Activated CD8-positive, alpha-beta memory T cell treated with anti-CD3 and anti-CD28 coated beads, Interleukin-2, amount 10 ng/mL, durations not matched to agents 7 days and 5 days (primary cell): ENCODE measurements at regions of chr10 and their contacts with region 1.

Region 1: GRCh38 chr10:124741281-124741921 is 2.8 kb downstream of the FAM53B start:
- DNase-seq: peak; percentile 84
- ATAC-seq: peak; percentile 62
- H3K4me3 Mint-ChIP-seq: peak overlapping the region; percentile 80
- H3K27ac Mint-ChIP-seq: peak overlapping the region; percentile 87
- H3K4me1 Mint-ChIP-seq: peaks cover 74% of the 10 kb centered on the region
- H3K27me3 Mint-ChIP-seq: peaks cover 2% of the 10 kb centered on the region

Region 2: DNA sequence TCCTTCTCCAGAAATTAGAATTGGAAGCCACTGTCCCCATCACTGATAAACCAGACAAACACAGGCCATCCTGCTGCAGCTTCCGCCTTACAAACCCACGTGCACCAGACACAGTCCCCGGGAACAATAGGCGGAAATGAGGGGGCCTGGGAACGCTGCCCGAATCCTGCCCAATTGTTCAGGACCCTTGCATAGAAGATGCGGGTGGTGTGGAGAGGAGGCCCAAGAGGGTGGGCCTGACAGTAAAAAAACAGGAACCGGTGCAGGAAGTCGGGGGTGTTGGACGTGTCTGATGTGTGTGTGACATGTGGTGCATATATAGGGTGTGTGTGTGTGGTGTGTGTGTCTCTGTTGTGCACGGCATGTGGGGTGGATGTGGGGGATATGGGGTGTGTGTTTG is 621.5 kb before region 1 on chr10:
- CTCF ChIA-PET with region 1: no interaction called
- DNase-seq: no peak
- ATAC-seq: no peak
- H3K4me3 Mint-ChIP-seq: no peak overlapping the region
- H3K27ac Mint-ChIP-seq: no peak overlapping the region
- H3K4me1 Mint-ChIP-seq: no peaks in the 10 kb centered on the region
- H3K27me3 Mint-ChIP-seq: no peaks in the 10 kb centered on the region

Region 3: DNA sequence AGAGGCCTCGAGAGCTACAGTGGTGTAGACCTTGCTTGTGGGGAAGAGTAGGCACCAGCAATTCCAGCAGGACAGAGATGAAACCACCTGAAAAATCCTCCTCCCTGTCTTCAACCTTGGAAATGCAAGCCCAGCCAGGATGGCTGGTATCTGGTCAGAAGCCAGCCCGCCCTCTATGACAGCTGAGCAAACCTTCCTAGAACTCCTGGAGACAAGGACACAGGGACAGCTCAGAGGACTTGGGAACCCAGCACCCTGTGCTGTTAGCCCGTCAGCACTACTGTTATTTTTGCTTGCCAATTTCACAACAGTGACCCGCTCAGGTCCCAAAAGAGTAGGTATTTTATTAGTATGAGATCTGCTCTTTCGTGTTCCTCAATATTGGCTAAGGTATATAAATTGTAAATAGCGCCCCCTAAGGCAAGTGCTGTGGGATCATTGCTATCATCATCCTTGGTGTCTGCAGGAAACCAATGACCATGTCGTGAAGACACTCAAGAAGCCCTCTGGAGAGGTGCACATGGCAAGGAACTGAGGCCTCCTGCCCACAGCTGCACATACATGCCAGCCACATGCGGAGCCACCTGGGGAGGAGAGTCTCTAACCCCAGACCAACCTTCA is 491.5 kb before region 1 on chr10:
- CTCF ChIA-PET with region 1: no interaction called
- DNase-seq: no peak
- ATAC-seq: no peak
- H3K4me3 Mint-ChIP-seq: no peak overlapping the region
- H3K27ac Mint-ChIP-seq: no peak overlapping the region
- H3K4me1 Mint-ChIP-seq: no peaks in the 10 kb centered on the region
- H3K27me3 Mint-ChIP-seq: peaks cover 9% of the 10 kb centered on the region

Region 4: DNA sequence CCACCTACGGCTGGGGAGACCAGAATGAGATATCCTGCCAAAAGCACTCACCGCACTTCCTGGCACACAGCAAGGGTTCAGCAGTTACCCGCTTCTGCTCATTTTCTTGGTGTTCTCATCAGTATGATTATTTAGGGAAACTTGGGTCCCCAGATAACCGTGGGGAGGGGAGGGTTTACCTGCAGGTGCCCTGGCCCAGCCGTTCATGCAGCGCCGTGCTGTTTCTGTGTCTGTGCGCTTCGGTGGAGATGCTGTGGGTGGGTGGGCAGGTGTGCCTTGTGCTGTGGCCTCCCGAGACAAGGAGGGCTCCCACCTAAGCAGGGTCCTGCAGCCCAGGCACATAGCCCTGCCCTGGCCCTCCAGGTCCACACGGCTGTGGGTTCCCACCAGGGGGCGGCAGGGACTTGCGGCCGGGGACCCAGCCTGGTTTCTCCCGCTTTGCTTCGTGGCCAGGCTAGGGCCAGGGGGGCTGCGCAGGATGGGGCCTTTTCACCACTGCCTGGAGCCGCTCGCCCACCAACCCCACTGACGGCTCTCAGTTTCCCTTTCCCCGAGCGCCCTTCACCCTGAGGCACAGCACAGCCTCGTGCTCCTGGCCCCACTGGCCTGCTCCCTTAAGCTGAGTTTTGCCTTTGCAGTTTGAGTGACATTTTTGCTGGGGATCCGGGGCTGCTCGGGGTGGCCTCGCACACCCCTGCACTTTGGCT is 201.3 kb before region 1 on chr10:
- CTCF ChIA-PET with region 1: interaction called, 44 read pairs
- DNase-seq: peak; percentile 75
- ATAC-seq: peak; percentile 87
- H3K4me3 Mint-ChIP-seq: no peak overlapping the region
- H3K27ac Mint-ChIP-seq: no peak overlapping the region
- H3K4me1 Mint-ChIP-seq: peaks cover 7% of the 10 kb centered on the region
- H3K27me3 Mint-ChIP-seq: no peaks in the 10 kb centered on the region

Region 5: GRCh38 chr10:124647421-124648130 is 93.8 kb before region 1 on chr10:
- CTCF ChIA-PET with region 1: interaction called, 70 read pairs
- DNase-seq: peak; percentile 91
- ATAC-seq: peak; percentile 72
- H3K4me3 Mint-ChIP-seq: peak overlapping the region; percentile 54
- H3K27ac Mint-ChIP-seq: peak overlapping the region; percentile 92
- H3K4me1 Mint-ChIP-seq: peaks cover 81% of the 10 kb centered on the region
- H3K27me3 Mint-ChIP-seq: no peaks in the 10 kb centered on the region

Region 6: GRCh38 chr10:124688889-124689670 is 52.3 kb before region 1 on chr10:
- CTCF ChIA-PET with region 1: interaction called, 40 read pairs
- DNase-seq: peak; percentile 92
- ATAC-seq: peak; percentile 95
- H3K4me3 Mint-ChIP-seq: peak overlapping the region; percentile 52
- H3K27ac Mint-ChIP-seq: peak overlapping the region; percentile 94
- H3K4me1 Mint-ChIP-seq: peaks cover 88% of the 10 kb centered on the region
- H3K27me3 Mint-ChIP-seq: no peaks in the 10 kb centered on the region

Region 7: GRCh38 chr10:124713679-124714255 is 27.6 kb before region 1 on chr10:
- CTCF ChIA-PET with region 1: interaction called, 92 read pairs
- DNase-seq: no peak
- ATAC-seq: no peak
- H3K4me3 Mint-ChIP-seq: no peak overlapping the region
- H3K27ac Mint-ChIP-seq: peak overlapping the region; percentile 12
- H3K4me1 Mint-ChIP-seq: peaks cover 85% of the 10 kb centered on the region
- H3K27me3 Mint-ChIP-seq: no peaks in the 10 kb centered on the region

Region 8: GRCh38 chr10:124827474-124827873 is 86.1 kb after region 1 on chr10:
- CTCF ChIA-PET with region 1: interaction called, 11 read pairs
- DNase-seq: no peak
- ATAC-seq: no peak
- H3K4me3 Mint-ChIP-seq: no peak overlapping the region
- H3K27ac Mint-ChIP-seq: no peak overlapping the region
- H3K4me1 Mint-ChIP-seq: no peaks in the 10 kb centered on the region
- H3K27me3 Mint-ChIP-seq: no peaks in the 10 kb centered on the region

Region 9: GRCh38 chr10:124860426-124860825 is 119.0 kb after region 1 on chr10:
- CTCF ChIA-PET with region 1: no interaction called
- DNase-seq: no peak
- ATAC-seq: no peak
- H3K4me3 Mint-ChIP-seq: no peak overlapping the region
- H3K27ac Mint-ChIP-seq: no peak overlapping the region
- H3K4me1 Mint-ChIP-seq: no peaks in the 10 kb centered on the region
- H3K27me3 Mint-ChIP-seq: peaks cover 15% of the 10 kb centered on the region